ENCODE measurements at regions of chr20 and their contacts with region 1.

Region 1: GRCh38 chr20:16158090-16158975 is 414.9 kb downstream of the KIF16B start:
- DNase-seq: peak; percentile 71
- ATAC-seq: peak; percentile 82
- H3K4me3 ChIP-seq: peak overlapping the region; percentile 26 to 54 (median 38)
- H3K4me3 Mint-ChIP-seq: peak overlapping the region; percentile 88
- H3K27ac ChIP-seq: peak overlapping the region; percentile 78 to 81
- H3K27ac Mint-ChIP-seq: peak overlapping the region; percentile 98
- H3K4me1 ChIP-seq: peaks cover 30 to 38% of the 10 kb centered on the region in 2 donors
- H3K4me1 Mint-ChIP-seq: peaks cover 60% of the 10 kb centered on the region
- H3K27me3 ChIP-seq: no peaks in the 10 kb centered on the region
- H3K27me3 Mint-ChIP-seq: no peaks in the 10 kb centered on the region
- CTCF ChIP-seq: no peak

Region 2: GRCh38 chr20:15875446-15875845 is 282.9 kb before region 1 on chr20:
- CTCF ChIA-PET with region 1: no interaction called
- POLR2A ChIA-PET with region 1: interaction called, 3 read pairs
- intact Hi-C with region 1: loop called (anchors 10 kb)
- DNase-seq: peak; percentile 65
- ATAC-seq: peak; percentile 71
- H3K4me3 ChIP-seq: no peak overlapping the region
- H3K4me3 Mint-ChIP-seq: peak overlapping the region; percentile 46
- H3K27ac ChIP-seq: no peak overlapping the region
- H3K27ac Mint-ChIP-seq: peak overlapping the region; percentile 60
- H3K4me1 ChIP-seq: peaks cover 19 to 21% of the 10 kb centered on the region in 2 donors
- H3K4me1 Mint-ChIP-seq: peaks cover 32% of the 10 kb centered on the region
- H3K27me3 ChIP-seq: no peaks in the 10 kb centered on the region
- H3K27me3 Mint-ChIP-seq: no peaks in the 10 kb centered on the region
- CTCF ChIP-seq: no peak

Region 3: DNA sequence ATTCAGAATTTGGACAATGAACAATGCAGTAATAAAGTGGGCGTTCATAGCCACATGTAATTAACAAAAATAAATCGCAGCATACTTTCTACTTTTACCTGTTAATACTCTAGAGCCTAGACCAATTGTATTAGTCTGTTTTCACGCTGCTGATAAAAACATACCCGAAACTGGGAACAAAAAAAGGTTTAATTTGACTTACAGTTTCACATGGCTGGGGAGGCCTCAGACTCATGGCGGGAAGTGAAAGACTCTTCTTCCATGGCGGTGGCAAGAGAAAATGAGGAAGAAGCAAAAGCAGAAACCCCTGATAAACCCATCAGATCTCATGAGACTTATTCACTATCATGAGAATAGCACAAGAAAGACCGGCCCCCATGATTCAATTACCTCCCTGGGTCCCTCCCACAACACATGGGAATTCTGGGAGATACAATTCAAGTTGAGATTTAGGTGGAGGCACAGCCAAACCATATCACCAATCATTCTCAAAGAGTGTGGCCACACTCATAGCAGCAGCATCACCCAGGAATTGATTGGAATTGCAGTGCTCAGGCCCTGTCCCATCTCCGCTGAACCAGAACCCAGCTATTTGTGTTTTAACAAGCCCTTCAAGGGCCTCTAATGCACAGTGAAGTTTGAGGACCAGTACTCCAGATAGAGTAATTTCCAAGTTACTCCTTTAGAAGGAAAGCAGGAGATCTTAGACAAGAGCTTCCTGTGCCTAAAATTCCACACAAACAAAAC is 235.1 kb before region 1 on chr20:
- CTCF ChIA-PET with region 1: no interaction called
- POLR2A ChIA-PET with region 1: no interaction called
- intact Hi-C with region 1: loop called (anchors 1 kb)
- DNase-seq: peak; percentile 83
- ATAC-seq: peak; percentile 70
- H3K4me3 ChIP-seq: peak overlapping the region; percentile 9 to 55 (median 28)
- H3K4me3 Mint-ChIP-seq: peak overlapping the region; percentile 40
- H3K27ac ChIP-seq: peak overlapping the region; percentile 71 to 88
- H3K27ac Mint-ChIP-seq: peak overlapping the region; percentile 84
- H3K4me1 ChIP-seq: peaks cover 59 to 63% of the 10 kb centered on the region in 2 donors
- H3K4me1 Mint-ChIP-seq: peaks cover 61% of the 10 kb centered on the region
- H3K27me3 ChIP-seq: no peaks in the 10 kb centered on the region
- H3K27me3 Mint-ChIP-seq: no peaks in the 10 kb centered on the region
- CTCF ChIP-seq: no peak

Region 4: DNA sequence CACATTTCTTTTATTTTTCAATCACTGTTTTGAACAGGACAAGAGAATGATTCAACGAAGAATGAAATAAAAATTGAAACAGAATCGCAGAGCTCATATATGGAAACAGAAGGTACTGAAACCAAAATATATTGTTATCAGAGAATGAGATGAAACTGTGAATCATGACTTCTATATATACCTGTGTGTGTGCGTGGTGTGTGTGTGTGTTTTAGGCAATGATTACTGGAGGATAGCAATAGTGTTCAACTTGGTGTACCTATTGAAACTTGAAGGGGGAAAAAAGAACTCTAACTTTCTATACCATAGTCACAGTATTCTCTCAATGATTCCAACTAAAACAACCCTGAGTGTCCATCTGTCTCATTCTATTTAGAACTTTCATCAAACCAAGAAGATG is 171.6 kb before region 1 on chr20:
- CTCF ChIA-PET with region 1: no interaction called
- POLR2A ChIA-PET with region 1: interaction called, 4 read pairs
- intact Hi-C with region 1: loop called (anchors 5 kb)
- DNase-seq: peak; percentile 31
- ATAC-seq: peak; percentile 80
- H3K4me3 ChIP-seq: peak overlapping the region in 3 of 5 experiments; percentile 33 to 65 (median 35)
- H3K4me3 Mint-ChIP-seq: peak overlapping the region; percentile 82
- H3K27ac ChIP-seq: peak overlapping the region; percentile 63 to 73
- H3K27ac Mint-ChIP-seq: peak overlapping the region; percentile 92
- H3K4me1 ChIP-seq: peaks cover 21 to 22% of the 10 kb centered on the region in 2 donors
- H3K4me1 Mint-ChIP-seq: peaks cover 31% of the 10 kb centered on the region
- H3K27me3 ChIP-seq: no peaks in the 10 kb centered on the region
- H3K27me3 Mint-ChIP-seq: no peaks in the 10 kb centered on the region
- CTCF ChIP-seq: no peak

Region 5: GRCh38 chr20:16040742-16041141 is 117.6 kb before region 1 on chr20:
- CTCF ChIA-PET with region 1: no interaction called
- POLR2A ChIA-PET with region 1: no interaction called
- intact Hi-C with region 1: loop called (anchors 2 kb)
- DNase-seq: peak; percentile 78
- ATAC-seq: peak; percentile 82
- H3K4me3 ChIP-seq: peak overlapping the region in 4 of 5 experiments; percentile 8 to 30 (median 19)
- H3K4me3 Mint-ChIP-seq: peak overlapping the region; percentile 52
- H3K27ac ChIP-seq: peak overlapping the region; percentile 83 to 86
- H3K27ac Mint-ChIP-seq: peak overlapping the region; percentile 61
- H3K4me1 ChIP-seq: peaks cover 59 to 71% of the 10 kb centered on the region in 2 donors
- H3K4me1 Mint-ChIP-seq: peaks cover 78% of the 10 kb centered on the region
- H3K27me3 ChIP-seq: no peaks in the 10 kb centered on the region
- H3K27me3 Mint-ChIP-seq: no peaks in the 10 kb centered on the region
- CTCF ChIP-seq: no peak

Region 6: DNA sequence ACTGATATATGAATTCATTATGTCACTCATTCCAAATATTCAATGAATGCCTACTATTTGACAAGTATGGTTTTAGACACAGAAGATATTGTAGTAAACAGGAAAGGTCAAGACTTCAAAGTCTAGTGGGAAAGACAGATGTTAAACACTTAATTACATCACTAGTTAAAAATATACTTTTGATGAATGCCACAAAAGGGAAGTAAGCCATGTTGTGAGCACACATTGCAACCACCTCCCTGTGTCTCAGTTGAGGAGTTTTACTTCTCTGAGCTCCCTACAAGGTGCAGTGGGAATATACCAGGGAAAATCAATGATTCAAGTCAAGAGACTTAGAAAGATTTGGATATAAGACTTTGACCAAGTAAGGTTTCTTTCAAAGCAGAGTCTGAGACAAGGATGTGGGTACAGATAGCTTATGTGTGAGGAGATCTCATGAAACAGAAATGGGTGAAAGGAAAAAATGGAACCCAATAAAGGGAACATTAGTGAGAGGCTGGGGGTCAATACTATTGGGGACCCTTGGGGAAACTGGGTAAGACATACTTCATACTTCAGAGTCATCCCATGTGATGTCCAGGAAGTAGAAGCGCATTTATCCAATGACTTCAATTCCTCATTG is 88.8 kb before region 1 on chr20:
- CTCF ChIA-PET with region 1: no interaction called
- POLR2A ChIA-PET with region 1: no interaction called
- intact Hi-C with region 1: loop called (anchors 1 kb)
- DNase-seq: peak; percentile 70
- ATAC-seq: peak; percentile 82
- H3K4me3 ChIP-seq: no peak overlapping the region
- H3K4me3 Mint-ChIP-seq: peak overlapping the region; percentile 62
- H3K27ac ChIP-seq: peak overlapping the region; percentile 67 to 80
- H3K27ac Mint-ChIP-seq: peak overlapping the region; percentile 90
- H3K4me1 ChIP-seq: peaks cover 38 to 48% of the 10 kb centered on the region in 2 donors
- H3K4me1 Mint-ChIP-seq: peaks cover 59% of the 10 kb centered on the region
- H3K27me3 ChIP-seq: no peaks in the 10 kb centered on the region
- H3K27me3 Mint-ChIP-seq: no peaks in the 10 kb centered on the region
- CTCF ChIP-seq: no peak

Region 7: DNA sequence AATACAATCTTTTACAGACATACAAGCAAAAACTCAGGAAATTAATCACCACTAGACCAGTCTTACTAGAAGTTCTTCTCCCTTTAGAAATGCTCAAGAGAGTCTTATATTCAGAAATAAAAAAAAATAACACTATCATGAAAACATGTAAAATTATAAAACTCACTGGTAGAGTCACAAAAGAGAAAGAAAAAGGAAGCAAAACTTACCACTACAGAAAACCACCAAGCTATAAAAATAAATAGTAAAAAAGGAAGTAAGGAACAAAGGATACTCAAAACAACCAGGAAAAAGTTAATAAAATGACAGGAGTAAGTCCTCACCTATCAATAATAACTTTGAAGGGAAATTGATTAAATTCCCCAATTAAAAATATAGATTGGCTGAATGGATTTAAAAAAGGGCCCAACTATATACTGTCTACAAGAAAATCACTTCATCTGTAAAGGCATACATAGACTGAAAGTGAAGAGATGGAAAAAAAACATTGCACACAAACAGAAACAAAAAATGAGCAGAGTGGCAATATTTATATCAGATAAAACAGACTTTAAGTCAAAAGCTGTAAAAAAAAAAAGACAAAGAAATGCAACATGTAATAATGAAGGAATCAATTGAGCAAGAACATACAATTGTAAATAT is 74.6 kb before region 1 on chr20:
- CTCF ChIA-PET with region 1: no interaction called
- POLR2A ChIA-PET with region 1: no interaction called
- intact Hi-C with region 1: loop called (anchors 5 kb)
- DNase-seq: peak; percentile 24
- ATAC-seq: peak; percentile 17
- H3K4me3 ChIP-seq: peak overlapping the region in 2 of 5 experiments; percentile 16 to 25
- H3K4me3 Mint-ChIP-seq: peak overlapping the region; percentile 10
- H3K27ac ChIP-seq: peak overlapping the region; percentile 9 to 71
- H3K27ac Mint-ChIP-seq: peak overlapping the region; percentile 47
- H3K4me1 ChIP-seq: peaks cover 37 to 59% of the 10 kb centered on the region in 2 donors
- H3K4me1 Mint-ChIP-seq: peaks cover 48% of the 10 kb centered on the region
- H3K27me3 ChIP-seq: no peaks in the 10 kb centered on the region
- H3K27me3 Mint-ChIP-seq: no peaks in the 10 kb centered on the region
- CTCF ChIP-seq: no peak

Region 8: GRCh38 chr20:16125816-16126215 is 32.5 kb before region 1 on chr20:
- CTCF ChIA-PET with region 1: no interaction called
- POLR2A ChIA-PET with region 1: no interaction called
- intact Hi-C with region 1: no loop called
- DNase-seq: no peak
- ATAC-seq: no peak
- H3K4me3 ChIP-seq: no peak overlapping the region
- H3K4me3 Mint-ChIP-seq: no peak overlapping the region
- H3K27ac ChIP-seq: no peak overlapping the region
- H3K27ac Mint-ChIP-seq: peak overlapping the region; percentile 50
- H3K4me1 ChIP-seq: peaks cover 7 to 9% of the 10 kb centered on the region in 2 donors
- H3K4me1 Mint-ChIP-seq: peaks cover 14% of the 10 kb centered on the region
- H3K27me3 ChIP-seq: no peaks in the 10 kb centered on the region
- H3K27me3 Mint-ChIP-seq: no peaks in the 10 kb centered on the region
- CTCF ChIP-seq: no peak

Region 9: GRCh38 chr20:16187956-16188616 is 29.8 kb after region 1 on chr20:
- CTCF ChIA-PET with region 1: no interaction called
- POLR2A ChIA-PET with region 1: no interaction called
- intact Hi-C with region 1: no loop called
- DNase-seq: no peak
- ATAC-seq: no peak
- H3K4me3 ChIP-seq: no peak overlapping the region
- H3K4me3 Mint-ChIP-seq: no peak overlapping the region
- H3K27ac ChIP-seq: no peak overlapping the region
- H3K27ac Mint-ChIP-seq: no peak overlapping the region
- H3K4me1 ChIP-seq: no peaks in the 10 kb centered on the region
- H3K4me1 Mint-ChIP-seq: peaks cover 4% of the 10 kb centered on the region
- H3K27me3 ChIP-seq: no peaks in the 10 kb centered on the region
- H3K27me3 Mint-ChIP-seq: no peaks in the 10 kb centered on the region
- CTCF ChIP-seq: no peak